CD8-positive, alpha-beta T cell (primary cell): ENCODE measurements at regions of chr15 and their contacts with region 1.

Region 1: GRCh38 chr15:49370782-49371181 is 52.3 kb upstream of the FGF7 start:
- DNase-seq: peak in 1 of 9 experiments; percentile 1
- ATAC-seq: no peak
- H3K4me3 ChIP-seq: no peak overlapping the region
- H3K4me3 Mint-ChIP-seq: no peak overlapping the region
- H3K27ac ChIP-seq: no peak overlapping the region
- H3K27ac Mint-ChIP-seq: no peak overlapping the region
- H3K4me1 ChIP-seq: no peaks in the 10 kb centered on the region
- H3K4me1 Mint-ChIP-seq: no peaks in the 10 kb centered on the region
- H3K27me3 ChIP-seq: no peaks in the 10 kb centered on the region
- H3K27me3 Mint-ChIP-seq: no peaks in the 10 kb centered on the region
- CTCF ChIP-seq: no peak

Region 2: DNA sequence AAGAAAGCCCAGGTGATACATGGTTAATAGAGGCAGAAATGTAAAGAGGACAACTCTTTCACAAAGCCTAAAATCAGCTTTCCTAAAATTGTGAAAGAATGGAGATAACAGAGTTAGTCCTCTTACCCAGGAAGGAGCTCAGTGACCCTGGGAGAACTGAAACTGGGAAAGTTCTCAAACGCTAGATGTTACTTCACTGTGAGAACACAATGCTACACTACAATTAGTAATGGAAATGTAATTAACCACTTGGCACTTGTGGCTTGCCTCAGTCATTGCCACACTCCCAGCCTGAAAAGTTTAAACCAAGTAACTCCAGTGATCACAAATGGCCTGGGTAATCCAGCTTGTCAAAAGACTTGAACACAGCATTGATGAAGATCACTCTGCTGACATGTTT is 50.4 kb before region 1 on chr15:
- CTCF ChIA-PET with region 1: no interaction called
- POLR2A ChIA-PET with region 1: no interaction called
- intact Hi-C with region 1: loop called in 1 of 2 experiments (anchors 10 kb)
- DNase-seq: no peak
- ATAC-seq: no peak
- H3K4me3 ChIP-seq: no peak overlapping the region
- H3K4me3 Mint-ChIP-seq: no peak overlapping the region
- H3K27ac ChIP-seq: no peak overlapping the region
- H3K27ac Mint-ChIP-seq: no peak overlapping the region
- H3K4me1 ChIP-seq: no peaks in the 10 kb centered on the region
- H3K4me1 Mint-ChIP-seq: peaks cover 4% of the 10 kb centered on the region
- H3K27me3 ChIP-seq: no peaks in the 10 kb centered on the region
- H3K27me3 Mint-ChIP-seq: no peaks in the 10 kb centered on the region
- CTCF ChIP-seq: no peak